ENCODE measurements at regions of chr2 and their contacts with region 1.

Region 1: DNA sequence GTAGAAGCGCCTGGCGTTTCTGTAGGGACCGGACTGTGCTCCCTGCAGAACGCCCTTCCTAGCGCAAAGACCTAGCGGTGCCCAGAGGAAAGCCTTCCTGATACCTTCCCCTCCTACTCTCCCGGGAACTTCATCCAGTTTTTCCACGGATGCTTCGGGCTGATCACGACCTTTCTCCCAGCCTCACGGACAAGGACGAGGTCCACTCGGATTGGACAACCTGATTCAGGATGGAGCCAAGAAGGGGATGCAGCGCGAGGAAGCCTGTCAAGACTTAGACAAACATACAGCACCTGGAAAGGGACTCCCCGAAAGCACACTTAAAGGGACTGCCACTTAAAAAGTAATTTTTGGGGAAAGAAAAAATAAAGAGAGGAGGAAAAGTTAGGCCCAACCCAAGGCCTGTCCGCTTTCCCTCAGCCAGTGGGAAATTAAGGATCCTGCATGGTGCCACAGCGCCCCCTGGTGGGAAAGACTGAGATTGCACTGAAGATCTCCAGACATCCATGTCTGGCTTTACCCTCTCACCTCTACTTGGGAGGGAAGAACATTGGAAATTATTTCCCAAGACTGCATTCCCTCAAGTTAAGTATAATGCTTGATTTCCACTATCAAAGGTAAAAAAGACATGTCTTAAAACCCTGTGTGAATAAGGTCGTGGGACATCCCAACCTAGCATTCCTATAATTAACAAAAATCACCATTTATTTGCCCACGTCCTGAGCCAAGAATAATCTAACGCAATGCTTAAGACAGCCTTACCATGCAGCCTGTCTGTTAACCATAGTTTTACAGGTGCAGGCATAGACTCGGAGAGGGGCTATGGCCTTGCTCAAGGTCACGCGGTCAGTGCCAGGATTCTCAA is 13.4 kb upstream of the COPS8 start:
- DNase-seq: peak in 1 of 2 donors; percentile 83
- ATAC-seq: peak; percentile 64

Region 2: DNA sequence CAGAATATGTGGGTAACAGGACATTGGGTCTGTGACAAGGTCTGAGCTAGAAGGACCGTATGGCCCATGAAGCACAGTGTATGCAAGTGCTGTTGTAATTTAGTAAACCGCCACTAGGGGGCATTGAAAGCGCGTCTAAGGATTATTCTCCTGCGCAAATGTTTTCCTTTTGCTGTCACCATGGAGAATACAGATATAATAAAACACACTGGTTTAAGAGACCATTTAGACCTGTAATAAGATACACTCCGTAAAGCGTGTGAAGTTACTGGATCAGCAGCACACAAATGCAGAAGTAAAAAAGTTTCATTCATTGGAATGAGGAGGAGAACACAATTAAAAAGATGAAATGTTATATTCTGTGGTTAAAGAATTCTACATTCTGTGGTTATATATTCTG is 1306.0 kb before region 1 on chr2:
- intact Hi-C with region 1: loop called in 1 of 2 experiments (anchors 10 kb)
- DNase-seq: peak in 1 of 2 donors; percentile 66
- ATAC-seq: peak; percentile 90

Region 3: GRCh38 chr2:236875885-236876505 is 196.3 kb before region 1 on chr2:
- intact Hi-C with region 1: no loop called
- DNase-seq: no peak
- ATAC-seq: no peak

Region 4: DNA sequence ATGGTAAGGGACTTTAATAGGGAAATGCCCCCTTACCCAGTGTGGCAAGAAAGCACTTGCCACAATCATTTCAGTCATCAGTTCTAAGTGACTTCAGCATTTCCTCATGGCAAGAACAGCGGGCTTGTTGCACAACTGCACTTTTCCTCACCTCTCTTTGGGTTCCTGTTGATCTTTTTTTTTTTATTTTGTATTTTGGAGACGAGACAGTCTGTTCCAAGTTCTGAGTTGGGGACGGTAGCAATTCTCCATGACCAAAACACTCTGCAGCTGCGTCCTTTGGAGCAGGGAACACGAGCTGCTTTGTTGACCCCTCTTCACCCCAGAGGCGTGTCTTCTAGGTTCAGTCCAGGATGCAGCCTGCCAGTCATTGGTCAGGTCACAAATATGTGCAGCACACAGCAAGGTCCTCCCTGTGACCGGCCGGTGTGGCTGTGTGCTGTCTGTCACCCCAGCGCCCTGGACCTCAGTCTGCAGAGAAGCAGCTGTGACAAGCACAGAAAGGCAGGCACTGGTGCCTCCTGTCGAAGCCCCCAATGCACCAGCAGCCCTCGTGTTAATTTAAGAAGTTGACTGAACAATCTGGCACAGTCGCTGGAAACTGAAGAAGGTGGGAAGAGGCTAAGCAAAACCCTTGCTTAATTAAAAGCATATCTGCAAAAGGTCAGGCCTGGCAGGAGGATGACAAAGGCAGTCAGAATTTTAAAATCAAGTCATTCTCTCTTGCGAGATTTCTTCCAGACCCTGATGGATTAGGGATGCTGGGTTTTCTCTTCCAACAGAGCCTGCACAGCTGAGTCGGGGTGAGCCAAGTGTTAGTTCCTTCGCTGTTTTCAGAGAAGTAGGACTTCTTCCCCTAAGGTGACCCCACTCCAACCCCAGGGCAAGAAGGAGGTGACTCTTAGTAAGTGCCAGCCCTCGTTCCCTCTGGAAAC is 83.3 kb before region 1 on chr2:
- intact Hi-C with region 1: no loop called
- DNase-seq: peak in 1 of 2 donors; percentile 49
- ATAC-seq: no peak

Region 5: GRCh38 chr2:237413777-237414661 is 341.7 kb after region 1 on chr2 and contains the start of gene COL6A3:
- intact Hi-C with region 1: no loop called
- DNase-seq: peak; percentile 54 to 69
- ATAC-seq: no peak
- total RNA-seq, gene COL6A3: 22.6 to 79.5 TPM

Measured in left colon (tissue), 2 donors.